ENCODE measurements at regions of chr12 and their contacts with region 1.

Region 1: GRCh38 chr12:118372541-118373495 is at the start of gene TAOK3:
- DNase-seq: peak; percentile 97
- H3K4me3 ChIP-seq: peak within 1 kb of the TSS; percentile 74 to 91
- H3K27ac ChIP-seq: peak within 1 kb of the TSS; percentile 71 to 76
- H3K4me1 ChIP-seq: peaks cover 9 to 22% of the 10 kb centered on the region in 2 experiments; a peak in 3 of 4 replicates
- H3K27me3 ChIP-seq: no peaks in the 10 kb centered on the region
- CTCF ChIP-seq: no peak
- EP300 ChIP-seq: no peak
- RAD21 ChIP-seq: no peak
- polyA plus RNA-seq, gene TAOK3: 18.1 and 20.6 TPM in 2 replicates

Region 2: GRCh38 chr12:118038122-118038521 is 334.7 kb before region 1 on chr12:
- CTCF ChIA-PET with region 1: no interaction called
- POLR2A ChIA-PET with region 1: no interaction called
- DNase-seq: no peak
- H3K4me3 ChIP-seq: no peak overlapping the region
- H3K27ac ChIP-seq: no peak overlapping the region
- H3K4me1 ChIP-seq: peaks cover 10 to 12% of the 10 kb centered on the region in 2 experiments; a peak in 2 of 4 replicates
- H3K27me3 ChIP-seq: no peaks in the 10 kb centered on the region
- CTCF ChIP-seq: no peak
- EP300 ChIP-seq: no peak
- RAD21 ChIP-seq: no peak

Region 3: DNA sequence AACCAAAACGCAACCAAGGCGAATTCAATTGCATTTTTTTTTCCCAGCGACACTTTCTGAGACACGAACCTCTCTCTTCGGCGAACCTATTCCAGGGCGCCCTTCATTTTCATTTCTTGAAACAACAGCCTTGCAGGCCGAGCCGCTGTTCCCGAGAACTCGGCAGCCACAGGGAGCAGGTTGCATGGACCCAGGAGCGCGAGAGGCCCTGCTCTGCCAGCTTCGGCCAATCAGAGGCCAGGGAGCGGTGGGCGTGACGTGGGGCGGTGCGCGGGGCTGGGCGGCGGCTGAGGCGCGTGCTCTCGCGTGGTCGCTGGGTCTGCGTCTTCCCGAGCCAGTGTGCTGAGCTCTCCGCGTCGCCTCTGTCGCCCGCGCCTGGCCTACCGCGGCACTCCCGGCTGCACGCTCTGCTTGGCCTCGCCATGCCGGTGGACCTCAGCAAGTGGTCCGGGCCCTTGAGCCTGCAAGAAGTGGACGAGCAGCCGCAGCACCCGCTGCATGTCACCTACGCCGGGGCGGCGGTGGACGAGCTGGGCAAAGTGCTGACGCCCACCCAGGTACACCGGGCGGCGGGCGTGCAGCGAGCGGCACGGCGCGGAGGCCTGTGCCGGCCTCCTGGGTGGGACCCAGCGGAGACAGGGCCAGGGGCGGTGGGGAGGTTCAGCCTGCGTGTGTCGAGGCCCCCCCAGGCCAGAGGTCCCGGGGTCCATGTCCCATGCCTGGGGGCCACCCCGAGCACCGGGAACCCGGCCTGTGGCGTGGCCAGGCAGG is 236.8 kb before region 1 on chr12 and contains the start of gene PEBP1:
- CTCF ChIA-PET with region 1: interaction called, 20 read pairs
- POLR2A ChIA-PET with region 1: interaction called, 6 read pairs
- DNase-seq: peak; percentile 97
- H3K4me3 ChIP-seq: peak within 1 kb of the TSS; percentile 70 to 81
- H3K27ac ChIP-seq: peak within 1 kb of the TSS; percentile 57 to 61
- H3K4me1 ChIP-seq: peaks cover 0 to 4% of the 10 kb centered on the region in 2 experiments; a peak in 1 of 4 replicates
- H3K27me3 ChIP-seq: no peaks in the 10 kb centered on the region
- CTCF ChIP-seq: no peak
- EP300 ChIP-seq: no peak
- RAD21 ChIP-seq: no peak
- polyA plus RNA-seq, gene PEBP1: 186 and 219 TPM in 2 replicates

Region 4: DNA sequence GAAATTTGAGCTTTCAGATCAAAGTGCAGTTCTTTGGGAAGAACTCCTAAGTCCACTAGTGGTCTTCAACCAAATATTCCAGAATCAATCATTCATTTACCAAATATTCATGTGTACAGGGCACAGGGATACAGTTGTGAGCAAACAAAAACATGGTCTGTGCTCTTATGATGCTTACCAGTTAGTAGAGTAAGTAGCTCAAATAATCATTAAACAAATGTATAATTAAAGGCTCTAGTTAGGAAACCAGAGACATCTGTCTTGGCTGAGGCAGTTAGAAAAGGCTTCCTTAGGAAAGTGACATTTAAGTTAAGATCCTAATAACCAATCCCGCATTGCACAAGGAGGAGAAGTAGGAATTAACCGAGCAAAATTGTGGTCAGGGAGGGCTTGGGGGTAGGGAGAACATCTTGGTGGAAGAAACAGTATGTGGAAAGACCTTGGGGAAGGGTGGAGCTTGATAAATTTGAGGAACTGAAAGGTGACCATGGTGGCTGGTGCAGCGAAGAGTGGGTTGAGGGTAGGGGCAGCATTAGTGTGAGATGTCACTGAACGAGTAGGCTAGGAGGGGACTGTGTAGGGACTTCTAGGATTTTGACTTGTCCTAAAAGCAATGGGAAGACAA is 196.9 kb before region 1 on chr12:
- CTCF ChIA-PET with region 1: interaction called, 267 read pairs
- POLR2A ChIA-PET with region 1: interaction called, 3 read pairs
- DNase-seq: no peak
- H3K4me3 ChIP-seq: no peak overlapping the region
- H3K27ac ChIP-seq: no peak overlapping the region
- H3K4me1 ChIP-seq: no peaks in the 10 kb centered on the region
- H3K27me3 ChIP-seq: no peaks in the 10 kb centered on the region
- CTCF ChIP-seq: no peak
- EP300 ChIP-seq: no peak
- RAD21 ChIP-seq: no peak

Region 5: GRCh38 chr12:118189741-118190191 is 183.1 kb before region 1 on chr12:
- CTCF ChIA-PET with region 1: interaction called, 267 read pairs
- POLR2A ChIA-PET with region 1: interaction called, 8 read pairs
- DNase-seq: peak; percentile 53
- H3K4me3 ChIP-seq: peak overlapping the region; percentile 38 to 54
- H3K27ac ChIP-seq: peak overlapping the region; percentile 91 to 99
- H3K4me1 ChIP-seq: peaks cover 16 to 29% of the 10 kb centered on the region in 2 experiments; a peak in 3 of 4 replicates
- H3K27me3 ChIP-seq: no peaks in the 10 kb centered on the region
- CTCF ChIP-seq: no peak
- EP300 ChIP-seq: no peak
- RAD21 ChIP-seq: no peak

Region 6: GRCh38 chr12:118357257-118358007 is 15.4 kb before region 1 on chr12:
- CTCF ChIA-PET with region 1: interaction called, 36 read pairs
- POLR2A ChIA-PET with region 1: interaction called, 3 read pairs
- DNase-seq: peak; percentile 42
- H3K4me3 ChIP-seq: no peak overlapping the region
- H3K27ac ChIP-seq: peak overlapping the region; percentile 77 to 96; a peak in 3 of 4 replicates
- H3K4me1 ChIP-seq: peaks cover 4 to 43% of the 10 kb centered on the region in 2 experiments; a peak in 3 of 4 replicates
- H3K27me3 ChIP-seq: no peaks in the 10 kb centered on the region
- CTCF ChIP-seq: peak; percentile 54
- EP300 ChIP-seq: no peak
- RAD21 ChIP-seq: no peak

Measured in SK-N-SH (cell line).